Activated CD8-positive, alpha-beta T cell treated with anti-CD3 and anti-CD28 coated beads for 36 hours (primary cell): ENCODE measurements at regions of chr2 and their contacts with region 1.

Region 1: DNA sequence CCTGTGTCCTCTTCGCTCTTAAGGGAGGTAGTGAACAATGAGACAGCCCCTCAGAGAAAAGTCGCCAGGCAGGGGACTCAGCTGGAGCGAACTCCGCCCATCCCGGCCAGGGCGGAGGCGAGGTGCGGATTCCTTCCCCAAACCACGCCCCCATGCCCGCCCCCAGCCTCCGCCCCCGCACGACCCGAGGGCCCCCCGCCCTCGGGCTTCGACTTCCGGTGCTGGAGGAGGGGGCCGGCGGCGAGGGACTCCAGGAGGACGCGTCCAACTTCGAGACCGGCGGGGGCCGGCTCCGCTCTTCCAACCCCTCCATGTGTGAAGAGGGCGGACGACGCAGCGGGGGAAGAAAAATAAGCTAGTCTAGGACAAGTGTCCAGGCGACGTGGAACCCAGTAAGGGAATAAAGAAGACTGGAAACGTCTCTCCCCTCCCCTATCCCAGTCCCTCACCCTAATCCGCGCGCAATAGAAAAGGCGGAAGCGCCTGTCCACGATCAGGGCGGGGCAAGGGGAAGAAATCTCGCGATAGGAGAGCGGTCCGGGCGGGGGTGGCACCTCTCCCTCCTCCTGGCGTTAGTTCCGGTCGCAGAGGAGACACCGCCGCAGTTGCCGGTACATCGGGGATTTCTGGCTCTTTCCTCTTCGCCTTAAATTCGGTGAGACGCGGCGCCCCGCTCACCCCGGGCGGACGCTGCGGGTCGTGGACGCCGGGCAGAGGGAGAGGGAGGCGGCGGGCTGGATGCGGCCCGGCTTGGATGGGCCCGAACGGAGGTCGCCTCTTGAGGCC is at the start of gene BZW1:
- DNase-seq: peak; percentile 97
- ATAC-seq: peak; percentile 88
- H3K4me3 Mint-ChIP-seq: peak within 1 kb of the TSS; percentile 99
- H3K27ac Mint-ChIP-seq: peak within 1 kb of the TSS; percentile 99
- H3K4me1 Mint-ChIP-seq: peaks cover 42% of the 10 kb centered on the region
- H3K27me3 Mint-ChIP-seq: no peaks in the 10 kb centered on the region
- CTCF ChIP-seq: no peak
- total RNA-seq, gene BZW1: 423 to 442 TPM

Region 2: GRCh38 chr2:200713003-200713703 is 98.4 kb before region 1 on chr2:
- CTCF ChIA-PET with region 1: interaction called, 23 read pairs
- POLR2A ChIA-PET with region 1: interaction called, 15 read pairs
- intact Hi-C with region 1: loop called (anchors 1 kb)
- DNase-seq: peak; percentile 98
- ATAC-seq: peak; percentile 95
- H3K4me3 Mint-ChIP-seq: peak overlapping the region; percentile 73
- H3K27ac Mint-ChIP-seq: peak overlapping the region; percentile 100
- H3K4me1 Mint-ChIP-seq: peaks cover 43% of the 10 kb centered on the region
- H3K27me3 Mint-ChIP-seq: peaks cover 4% of the 10 kb centered on the region
- CTCF ChIP-seq: peak; percentile 71

Region 3: DNA sequence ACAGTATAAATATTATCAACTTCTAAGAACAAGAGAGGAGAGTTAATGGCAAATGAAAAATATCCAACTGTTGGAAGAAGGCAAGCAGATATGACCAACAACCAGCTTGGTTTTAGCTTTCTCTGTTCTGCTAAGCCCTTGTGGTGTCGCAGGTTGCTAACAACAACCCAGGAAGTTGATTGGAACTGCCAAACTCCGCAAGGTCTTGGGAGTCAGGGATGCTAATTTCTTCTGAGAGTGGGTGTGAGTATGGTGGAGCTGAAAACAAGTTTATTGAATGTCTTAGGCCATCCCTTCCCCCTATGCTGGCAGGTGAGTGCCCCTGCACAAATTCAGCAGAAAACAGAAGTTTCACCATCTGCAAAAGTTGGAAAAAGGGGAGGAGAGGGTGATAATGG is 17.7 kb after region 1 on chr2:
- CTCF ChIA-PET with region 1: interaction called, 11 read pairs
- POLR2A ChIA-PET with region 1: interaction called, 67 read pairs
- intact Hi-C with region 1: no loop called
- DNase-seq: no peak
- ATAC-seq: no peak
- H3K4me3 Mint-ChIP-seq: no peak overlapping the region
- H3K27ac Mint-ChIP-seq: no peak overlapping the region
- H3K4me1 Mint-ChIP-seq: peaks cover 7% of the 10 kb centered on the region
- H3K27me3 Mint-ChIP-seq: no peaks in the 10 kb centered on the region
- CTCF ChIP-seq: no peak

Region 4: DNA sequence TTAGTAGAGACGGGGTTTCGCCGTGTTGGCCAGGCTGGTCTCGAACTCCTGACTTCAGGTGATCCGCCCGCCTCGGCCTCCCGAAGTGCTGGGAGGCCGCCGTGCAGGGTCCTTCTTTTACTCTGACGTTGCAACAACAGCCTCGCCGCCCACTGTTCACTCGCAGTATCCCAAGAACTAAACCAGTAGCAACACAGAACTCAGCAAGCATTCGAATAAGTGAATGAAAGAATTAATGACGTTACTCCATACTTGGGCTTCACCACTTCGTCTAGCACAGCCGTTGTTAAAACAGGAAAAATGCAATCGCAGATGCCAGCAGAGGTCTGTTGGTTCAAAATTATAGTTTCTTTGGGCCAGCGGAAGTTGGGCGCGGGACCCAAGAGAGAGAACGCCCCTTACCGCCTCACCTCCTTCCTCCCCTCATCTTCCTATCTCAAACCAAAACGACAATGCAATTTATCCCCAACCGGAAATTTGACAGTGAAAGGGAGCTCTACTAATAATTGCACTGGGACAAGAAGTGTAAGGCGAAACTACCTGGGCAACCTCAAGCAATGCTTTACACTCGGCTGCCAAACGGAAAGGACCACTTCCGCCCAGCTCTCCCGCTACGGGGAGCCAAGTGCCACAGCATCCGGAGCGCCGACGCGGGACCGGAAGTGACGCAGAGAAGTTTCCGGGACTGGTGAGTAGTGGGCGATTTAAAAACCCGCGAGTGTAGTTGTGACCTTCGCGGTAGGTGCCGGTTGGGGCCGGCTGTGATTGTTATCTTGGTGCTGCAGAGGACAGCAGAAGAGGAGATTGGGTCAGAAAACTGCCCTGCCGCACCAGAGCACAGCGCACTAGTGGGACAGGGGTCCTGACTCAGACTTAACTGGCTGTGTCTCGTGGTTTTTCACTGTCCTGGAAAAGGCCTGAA is 77.4 kb after region 1 on chr2 and contains the starts of genes NIF3L1 and PPIL3:
- CTCF ChIA-PET with region 1: no interaction called
- POLR2A ChIA-PET with region 1: no interaction called
- intact Hi-C with region 1: loop called (anchors 1 kb)
- DNase-seq: peak; percentile 99
- ATAC-seq: peak; percentile 83
- H3K4me3 Mint-ChIP-seq: peak within 1 kb of the TSS; percentile 87
- H3K27ac Mint-ChIP-seq: peak within 1 kb of the TSS; percentile 99
- H3K4me1 Mint-ChIP-seq: peaks cover 46% of the 10 kb centered on the region
- H3K27me3 Mint-ChIP-seq: no peaks in the 10 kb centered on the region
- CTCF ChIP-seq: no peak
- total RNA-seq, gene NIF3L1: 30.8 to 35.3 TPM
- total RNA-seq, gene PPIL3: 97.9 to 99.4 TPM